Tibial artery (tissue), 4 donors: ENCODE measurements at regions of chr11 and their contacts with region 1.

Region 1: DNA sequence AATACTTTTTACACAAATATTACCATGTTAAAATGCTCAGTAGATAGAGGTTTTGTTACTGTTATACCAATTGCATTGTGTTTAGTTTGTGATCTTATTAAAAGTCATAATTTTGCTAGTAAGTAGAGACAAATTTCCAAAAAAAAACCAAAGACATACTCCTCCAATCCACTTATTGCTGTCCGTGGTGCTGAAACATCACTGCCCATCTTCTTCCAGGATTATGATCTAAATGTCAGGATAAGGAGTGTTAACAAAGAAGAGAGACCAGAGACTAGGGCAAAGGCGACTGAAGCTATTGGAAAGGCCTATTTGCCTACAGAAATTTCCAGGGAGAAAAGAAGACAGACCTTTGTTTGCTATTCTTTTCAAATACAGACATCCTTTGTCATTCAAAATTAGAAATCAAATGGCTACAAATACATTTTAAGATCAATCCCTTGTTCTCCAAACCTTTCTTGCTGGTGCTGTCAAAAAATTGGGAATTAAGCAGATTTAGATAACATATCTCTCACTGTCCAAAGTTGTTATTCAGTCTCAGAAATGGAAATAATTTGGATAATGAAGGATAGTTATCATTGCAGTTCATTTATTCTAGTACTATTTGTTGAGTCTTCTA is 199.7 kb downstream of the C11orf91 start:
- DNase-seq: no peak
- H3K4me3 ChIP-seq: no peak overlapping the region
- H3K27ac ChIP-seq: no peak overlapping the region
- H3K4me1 ChIP-seq: no peaks in the 10 kb centered on the region
- H3K27me3 ChIP-seq: no peaks in the 10 kb centered on the region
- CTCF ChIP-seq: no peak

Region 2: GRCh38 chr11:32374261-32374711 is 1126.7 kb before region 1 on chr11:
- intact Hi-C with region 1: loop called (anchors 5 kb)
- DNase-seq: no peak
- H3K4me3 ChIP-seq: no peak overlapping the region
- H3K27ac ChIP-seq: no peak overlapping the region
- H3K4me1 ChIP-seq: no peaks in the 10 kb centered on the region
- H3K27me3 ChIP-seq: peaks cover 0 to 7% of the 10 kb centered on the region in 2 donors
- CTCF ChIP-seq: no peak